Posterior vena cava (tissue), 2 donors: ENCODE measurements at regions of chr6 and their contacts with region 1.

Region 1: GRCh38 chr6:9825526-9825925 is 589.3 kb downstream of the TFAP2A start:
- DNase-seq: no peak

Region 2: GRCh38 chr6:9593566-9593965 is 232.0 kb before region 1 on chr6:
- intact Hi-C with region 1: no loop called
- DNase-seq: no peak

Region 3: GRCh38 chr6:9745476-9745875 is 80.0 kb before region 1 on chr6:
- intact Hi-C with region 1: loop called in 1 of 2 experiments (anchors 2 kb)
- DNase-seq: no peak